PC-3 (cell line): ENCODE measurements at regions of chr3 and their contacts with region 1.

Region 1: DNA sequence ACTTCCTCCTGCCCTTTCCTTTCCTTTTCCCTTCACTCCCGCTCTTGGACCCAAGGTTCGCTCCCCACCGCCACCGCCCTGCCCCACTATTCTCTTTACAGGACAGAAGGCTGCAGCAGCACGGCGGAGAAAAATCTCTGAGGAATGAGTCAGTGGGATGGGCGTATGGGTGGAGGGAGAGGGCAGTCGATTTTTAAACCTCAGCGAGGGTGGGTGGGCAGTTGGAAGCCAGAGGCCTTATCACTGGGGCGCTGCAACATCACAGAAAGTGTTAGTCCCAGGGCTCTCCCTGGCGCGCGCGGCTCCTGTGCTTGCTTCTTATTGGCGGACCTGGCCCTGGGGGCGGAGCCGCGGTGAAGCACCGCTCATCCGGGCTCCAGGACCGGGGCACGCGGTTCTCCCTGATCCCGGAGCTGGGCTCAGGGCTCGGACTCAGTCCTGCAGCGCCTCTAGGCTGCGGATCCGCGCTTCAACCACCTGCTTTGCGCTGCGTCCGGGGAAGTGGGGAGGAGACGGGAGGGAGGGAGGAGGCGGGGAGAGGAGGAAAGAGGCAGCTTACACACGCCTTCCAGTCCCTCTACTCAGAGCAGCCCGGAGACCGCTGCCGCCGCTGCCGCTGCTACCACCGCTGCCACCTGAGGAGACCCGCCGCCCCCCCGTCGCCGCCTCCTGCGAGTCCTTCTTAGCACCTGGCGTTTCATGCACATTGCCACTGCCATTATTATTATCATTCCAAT is at the start of gene ALCAM:
- DNase-seq: peak; percentile 99
- ATAC-seq: peak; percentile 72
- H3K4me3 ChIP-seq: peak within 1 kb of the TSS; percentile 83
- H3K27ac ChIP-seq: peak within 1 kb of the TSS; percentile 96
- H3K4me1 ChIP-seq: peaks cover 49% of the 10 kb centered on the region
- H3K27me3 ChIP-seq: no peaks in the 10 kb centered on the region
- CTCF ChIP-seq: peak; percentile 76
- total RNA-seq, gene ALCAM: 168 and 169 TPM in 2 replicates

Region 2: GRCh38 chr3:104273046-104273649 is 1093.3 kb before region 1 on chr3:
- CTCF ChIA-PET with region 1: no interaction called
- POLR2A ChIA-PET with region 1: no interaction called
- intact Hi-C with region 1: loop called (anchors 5 kb)
- DNase-seq: peak; percentile 69
- ATAC-seq: peak; percentile 38; the same call in 1 of the 2 replicates
- H3K4me3 ChIP-seq: no peak overlapping the region
- H3K27ac ChIP-seq: no peak overlapping the region
- H3K4me1 ChIP-seq: no peaks in the 10 kb centered on the region
- H3K27me3 ChIP-seq: no peaks in the 10 kb centered on the region
- CTCF ChIP-seq: peak; percentile 89

Region 3: DNA sequence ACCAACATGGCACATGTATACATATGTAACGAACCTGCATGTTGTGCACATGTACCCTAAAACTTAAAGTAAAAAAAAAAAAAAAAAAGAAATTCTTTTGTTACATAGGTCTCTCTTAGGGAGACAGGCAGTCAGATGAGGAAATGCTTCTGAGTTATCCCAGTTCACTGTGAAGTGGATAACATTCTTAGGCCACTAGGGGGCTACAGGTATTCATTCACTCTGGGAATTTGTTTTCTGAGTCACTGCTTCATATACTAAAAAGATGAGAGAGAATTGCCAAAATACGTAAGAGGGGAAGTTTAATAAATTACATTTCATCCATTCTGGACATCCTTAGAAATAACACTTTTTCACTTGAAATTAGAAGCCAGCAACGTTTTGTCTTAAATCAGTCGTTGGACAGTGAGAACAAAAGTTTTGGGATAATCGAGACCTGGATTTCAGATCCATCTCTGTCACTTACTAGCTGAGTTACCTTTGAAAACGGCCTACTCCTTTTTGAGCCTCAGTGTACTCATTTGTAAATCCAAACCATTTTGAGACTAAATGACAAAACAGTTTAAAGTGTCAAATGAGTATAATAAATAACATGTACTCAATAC is 738.2 kb before region 1 on chr3:
- CTCF ChIA-PET with region 1: interaction called, 3 read pairs
- POLR2A ChIA-PET with region 1: no interaction called
- intact Hi-C with region 1: loop called (anchors 1 kb)
- DNase-seq: peak; percentile 91
- ATAC-seq: peak; percentile 75
- H3K4me3 ChIP-seq: peak overlapping the region; percentile 28; the same call in 1 of the 2 replicates
- H3K27ac ChIP-seq: peak overlapping the region; percentile 74
- H3K4me1 ChIP-seq: peaks cover 27% of the 10 kb centered on the region
- H3K27me3 ChIP-seq: no peaks in the 10 kb centered on the region
- CTCF ChIP-seq: peak; percentile 85

Region 4: DNA sequence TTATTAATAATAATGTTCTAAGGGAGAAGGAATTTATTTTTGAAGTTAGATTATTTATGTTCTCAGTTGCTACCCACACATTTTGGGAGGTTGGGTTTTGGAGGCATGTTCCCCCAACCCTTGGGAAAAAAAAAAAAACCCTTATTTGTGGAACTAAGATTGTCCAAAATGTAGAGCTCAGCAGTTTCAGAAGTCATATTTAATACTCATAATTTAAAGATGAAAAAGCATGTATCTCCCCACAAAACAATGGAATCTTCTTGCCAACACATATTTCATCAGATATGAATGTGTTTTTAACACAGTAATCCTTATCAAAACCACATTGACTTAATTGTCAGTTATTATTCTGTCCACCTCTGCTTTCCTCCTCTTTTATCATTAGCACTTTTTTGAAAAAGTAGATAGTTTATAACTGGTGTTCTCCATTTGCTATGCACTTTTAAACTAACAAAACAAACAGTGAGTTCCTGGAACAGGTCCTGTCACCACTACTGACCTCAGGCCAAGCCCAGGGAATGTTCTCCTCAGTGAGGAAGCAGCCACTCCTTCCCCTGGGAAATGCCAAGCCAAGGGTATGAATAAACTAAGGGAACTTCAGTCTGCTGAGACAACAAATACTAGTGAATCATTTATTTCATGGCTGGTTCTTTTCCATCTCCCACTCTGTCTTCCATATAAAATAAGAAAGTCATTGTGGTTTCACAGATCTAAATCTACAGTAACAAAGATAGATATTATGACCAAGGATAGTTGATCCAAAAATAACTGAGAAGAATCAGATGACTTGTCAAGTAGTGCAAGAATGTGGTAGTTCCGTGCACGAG is 414.1 kb before region 1 on chr3:
- CTCF ChIA-PET with region 1: no interaction called
- POLR2A ChIA-PET with region 1: no interaction called
- intact Hi-C with region 1: loop called (anchors 1 kb)
- DNase-seq: peak; percentile 94
- ATAC-seq: peak; percentile 100
- H3K4me3 ChIP-seq: no peak overlapping the region
- H3K27ac ChIP-seq: peak overlapping the region; percentile 92
- H3K4me1 ChIP-seq: peaks cover 21% of the 10 kb centered on the region
- H3K27me3 ChIP-seq: no peaks in the 10 kb centered on the region
- CTCF ChIP-seq: no peak

Region 5: DNA sequence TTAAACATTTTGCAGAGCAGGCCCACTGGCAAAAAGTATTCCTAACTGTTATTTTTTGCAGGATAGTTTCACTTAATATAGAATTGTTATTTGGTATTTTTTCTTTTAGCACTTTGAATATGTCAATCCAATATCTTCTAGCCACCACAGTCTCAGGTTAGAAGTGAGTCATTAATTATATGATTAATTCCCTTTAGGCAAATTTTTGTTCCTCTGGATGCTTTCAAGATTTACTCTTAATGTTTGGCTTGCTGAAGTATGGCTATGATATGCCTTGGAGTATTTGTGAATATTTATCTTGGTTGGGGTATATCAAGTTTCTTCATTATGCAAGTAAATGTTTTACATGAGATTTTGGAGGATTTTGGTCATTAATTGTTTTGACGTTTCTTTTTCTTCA is 151.9 kb before region 1 on chr3:
- CTCF ChIA-PET with region 1: no interaction called
- POLR2A ChIA-PET with region 1: no interaction called
- intact Hi-C with region 1: loop called (anchors 5 kb)
- DNase-seq: no peak
- ATAC-seq: no peak
- H3K4me3 ChIP-seq: no peak overlapping the region
- H3K27ac ChIP-seq: no peak overlapping the region
- H3K4me1 ChIP-seq: no peaks in the 10 kb centered on the region
- H3K27me3 ChIP-seq: no peaks in the 10 kb centered on the region
- CTCF ChIP-seq: no peak

Region 6: DNA sequence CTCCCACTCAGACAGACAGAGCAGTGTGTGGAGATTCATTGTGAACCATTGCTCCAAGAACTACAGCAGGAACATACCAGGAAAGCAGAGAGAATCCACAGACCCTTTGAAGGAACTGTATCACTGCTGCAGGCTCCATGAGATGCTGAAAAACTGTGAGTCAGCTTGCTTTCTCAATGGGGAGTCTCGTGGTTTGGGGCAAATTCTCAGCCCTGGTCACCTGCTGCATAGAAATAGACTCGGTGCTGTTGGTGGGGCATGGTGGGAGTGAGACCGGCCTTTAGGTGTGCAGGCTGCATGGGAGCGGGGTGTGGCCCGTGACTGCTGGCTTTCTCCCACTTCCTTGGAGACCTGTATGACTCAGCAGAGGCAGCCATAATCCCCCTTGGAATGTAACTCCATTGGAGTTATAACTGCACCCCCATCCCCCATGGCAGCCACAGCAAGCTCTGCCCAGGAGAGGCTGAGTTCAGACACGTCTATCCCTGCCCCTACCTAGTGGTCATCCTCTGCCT is 35.9 kb after region 1 on chr3:
- CTCF ChIA-PET with region 1: no interaction called
- POLR2A ChIA-PET with region 1: interaction called, 19 read pairs
- intact Hi-C with region 1: no loop called
- DNase-seq: peak; percentile 97
- ATAC-seq: peak; percentile 74
- H3K4me3 ChIP-seq: peak overlapping the region; percentile 56
- H3K27ac ChIP-seq: peak overlapping the region; percentile 96
- H3K4me1 ChIP-seq: peaks cover 56% of the 10 kb centered on the region
- H3K27me3 ChIP-seq: no peaks in the 10 kb centered on the region
- CTCF ChIP-seq: no peak